ENCODE measurements at regions of chr18 and their contacts with region 1.

Region 1: GRCh38 chr18:61808286-61808685 is 84.5 kb downstream of the RNF152 start:
- DNase-seq: no peak
- ATAC-seq: no peak
- H3K4me3 ChIP-seq: no peak overlapping the region
- H3K27ac ChIP-seq: no peak overlapping the region
- H3K4me1 ChIP-seq: peaks cover 0 to 4% (median 0%) of the 10 kb centered on the region in 9 donors
- H3K27me3 ChIP-seq: no peaks in the 10 kb centered on the region
- CTCF ChIP-seq: no peak

Region 2: GRCh38 chr18:61765097-61765496 is 43.2 kb before region 1 on chr18:
- intact Hi-C with region 1: loop called in 1 of 10 experiments (anchors 5 kb)
- DNase-seq: no peak
- ATAC-seq: peak in 2 of 8 donors; percentile 38 to 42
- H3K4me3 ChIP-seq: no peak overlapping the region
- H3K27ac ChIP-seq: peak overlapping the region in 3 of 10 donors; percentile 9 to 33 (median 30)
- H3K4me1 ChIP-seq: peaks cover 0 to 8% (median 0%) of the 10 kb centered on the region in 9 donors
- H3K27me3 ChIP-seq: no peaks in the 10 kb centered on the region
- CTCF ChIP-seq: no peak

Region 3: GRCh38 chr18:61865466-61866175 is 57.3 kb after region 1 on chr18:
- intact Hi-C with region 1: loop called in 1 of 10 experiments (anchors 10 kb)
- DNase-seq: no peak
- ATAC-seq: peak in 1 of 8 donors; percentile 26
- H3K4me3 ChIP-seq: no peak overlapping the region
- H3K27ac ChIP-seq: peak overlapping the region in 3 of 10 donors; percentile 0 to 49 (median 11)
- H3K4me1 ChIP-seq: peaks cover 0 to 78% (median 27%) of the 10 kb centered on the region in 9 donors
- H3K27me3 ChIP-seq: no peaks in the 10 kb centered on the region
- CTCF ChIP-seq: no peak

Measured in heart right ventricle (tissue), 16 donors.